Ascending aorta (tissue), 2 donors: ENCODE measurements at regions of chr4 and their contacts with region 1.

Region 1: DNA sequence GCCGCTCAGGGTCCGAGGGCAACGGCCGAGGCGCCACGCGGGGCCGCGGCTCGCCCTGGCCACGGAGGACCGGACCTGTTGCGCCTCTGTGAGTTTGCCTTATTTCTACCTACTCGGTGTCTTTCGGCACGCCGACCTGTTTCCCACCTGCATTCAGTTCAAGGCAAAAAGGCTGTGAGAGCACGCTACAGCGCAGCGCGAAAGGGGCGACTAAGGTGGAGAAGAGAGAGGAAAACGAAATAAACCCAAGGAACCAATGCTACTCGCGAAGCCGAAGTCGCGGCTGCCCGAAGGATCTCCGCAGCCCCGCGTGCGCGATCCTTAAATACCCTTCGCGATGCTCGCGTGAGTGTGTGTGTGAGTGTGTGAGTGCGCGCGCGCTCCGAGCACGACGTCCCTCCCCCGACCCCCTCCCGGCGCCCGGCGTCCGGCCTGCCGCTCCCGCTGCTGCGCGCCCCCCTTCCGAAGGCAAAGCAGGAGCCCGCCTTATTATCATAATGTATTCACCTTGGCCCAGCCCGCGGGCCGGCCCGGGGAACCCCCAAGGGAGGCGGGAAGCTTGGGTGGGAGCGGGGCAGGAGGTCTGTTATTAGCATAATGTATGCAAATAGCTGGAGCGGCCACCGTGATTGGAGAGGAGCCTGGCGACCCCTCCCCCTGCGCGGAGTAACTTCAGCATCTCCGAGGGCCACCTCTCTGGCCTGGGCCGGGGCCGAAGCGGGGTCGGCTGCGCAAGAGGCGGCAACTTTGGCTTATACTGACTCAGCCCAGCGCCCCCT is at the start of gene COL25A1:
- DNase-seq: peak; percentile 12 to 76
- H3K4me3 ChIP-seq: peak within 1 kb of the TSS; percentile 67 to 68
- H3K27ac ChIP-seq: peak within 1 kb of the TSS; percentile 15 to 46
- H3K4me1 ChIP-seq: peaks cover 0 to 8% of the 10 kb centered on the region in 2 donors
- H3K27me3 ChIP-seq: no peaks in the 10 kb centered on the region
- CTCF ChIP-seq: no peak
- total RNA-seq, gene COL25A1: 5.6 TPM

Region 2: GRCh38 chr4:108926061-108926460 is 376.5 kb before region 1 on chr4:
- intact Hi-C with region 1: no loop called
- DNase-seq: no peak
- H3K4me3 ChIP-seq: no peak overlapping the region
- H3K27ac ChIP-seq: no peak overlapping the region
- H3K4me1 ChIP-seq: no peaks in the 10 kb centered on the region
- H3K27me3 ChIP-seq: no peaks in the 10 kb centered on the region
- CTCF ChIP-seq: no peak

Region 3: DNA sequence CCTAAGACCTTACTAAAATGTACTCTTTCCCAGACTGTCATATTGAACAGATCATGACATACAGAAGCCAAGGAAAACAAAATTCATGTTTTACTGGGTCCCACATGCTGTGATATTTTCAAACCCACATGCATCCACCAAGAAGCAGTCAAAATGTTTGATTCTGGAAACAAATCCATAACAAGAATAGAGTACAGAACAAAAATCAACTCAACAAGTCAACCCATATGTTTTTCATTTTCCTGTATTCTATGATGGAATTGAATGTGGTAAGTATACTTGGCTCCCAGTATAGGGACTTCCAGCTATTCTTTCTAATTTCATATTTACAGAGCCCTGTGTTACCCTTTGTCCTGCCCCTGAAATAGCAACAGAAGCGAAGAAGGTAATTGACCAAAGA is 106.9 kb before region 1 on chr4:
- intact Hi-C with region 1: no loop called
- DNase-seq: no peak
- H3K4me3 ChIP-seq: no peak overlapping the region
- H3K27ac ChIP-seq: no peak overlapping the region
- H3K4me1 ChIP-seq: no peaks in the 10 kb centered on the region
- H3K27me3 ChIP-seq: no peaks in the 10 kb centered on the region
- CTCF ChIP-seq: no peak

Region 4: DNA sequence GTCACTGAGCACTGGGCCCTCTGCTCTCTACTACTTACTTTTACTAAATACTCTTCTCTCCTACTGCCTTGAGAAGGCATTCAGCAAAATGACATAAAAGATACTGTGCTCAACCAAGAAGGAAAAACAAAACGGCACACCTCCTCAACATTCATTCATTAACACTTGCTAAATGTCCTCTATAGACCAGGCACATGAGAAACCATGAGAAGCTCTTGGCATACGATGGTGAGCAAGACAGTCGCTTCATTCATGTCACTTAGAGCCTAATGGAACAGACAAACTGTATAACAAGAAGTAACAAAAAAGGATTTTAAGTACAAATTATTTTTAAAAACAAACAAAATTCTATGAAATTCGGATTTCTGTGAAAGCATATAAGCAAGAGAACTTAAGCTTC is 38.8 kb before region 1 on chr4:
- intact Hi-C with region 1: loop called (anchors 2 kb)
- DNase-seq: no peak
- H3K4me3 ChIP-seq: no peak overlapping the region
- H3K27ac ChIP-seq: peak overlapping the region; percentile 18 to 74
- H3K4me1 ChIP-seq: peaks cover 0 to 13% of the 10 kb centered on the region in 2 donors
- H3K27me3 ChIP-seq: no peaks in the 10 kb centered on the region
- CTCF ChIP-seq: no peak